WTC11 (cell line): ENCODE measurements at regions of chr1 and their contacts with region 1.

Region 1: DNA sequence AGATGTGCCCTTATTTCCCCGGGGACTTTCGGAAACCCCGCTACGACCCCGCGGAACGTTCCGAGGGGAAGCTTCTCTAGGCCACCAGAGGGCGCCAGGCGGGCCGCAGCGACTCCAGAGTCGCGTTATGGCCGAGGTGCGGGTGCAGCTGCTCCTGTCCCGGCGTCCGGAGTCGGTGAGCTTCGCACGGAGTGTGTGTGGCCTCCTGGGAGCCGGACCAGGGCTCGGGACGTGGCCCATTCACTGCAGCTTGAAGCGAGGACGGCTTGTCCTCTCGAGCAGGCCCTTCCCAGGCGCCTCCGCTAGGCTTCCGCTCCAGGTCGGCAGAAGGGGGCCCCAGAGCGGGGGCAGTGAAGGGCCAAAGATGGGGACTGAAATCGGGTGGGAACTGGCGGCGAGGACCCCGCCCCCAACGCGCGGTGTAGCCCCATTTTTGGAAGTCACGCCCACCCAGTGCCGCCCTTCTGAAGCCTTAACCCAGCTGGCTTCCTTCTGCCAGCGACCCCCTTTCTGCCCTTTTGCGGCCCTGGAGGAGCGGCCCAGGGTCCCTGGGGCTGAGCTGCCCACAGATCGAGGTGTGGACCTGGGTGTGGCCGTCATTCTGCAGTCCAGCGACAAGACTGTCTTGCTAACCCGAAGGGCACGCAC is at the start of gene NUDT17:
- DNase-seq: peak; percentile 88
- ATAC-seq: peak; percentile 78
- H3K4me3 Mint-ChIP-seq: no peak within 1 kb of the TSS
- H3K27ac Mint-ChIP-seq: no peak within 1 kb of the TSS
- H3K4me1 Mint-ChIP-seq: peaks cover 3% of the 10 kb centered on the region; the same call in 1 of the 2 replicates
- H3K27me3 Mint-ChIP-seq: no peaks in the 10 kb centered on the region
- CTCF ChIP-seq: peak; percentile 82
- total RNA-seq, gene NUDT17: 2.7 to 3.5 TPM (median 3.3 TPM) in 3 replicates

Region 2: DNA sequence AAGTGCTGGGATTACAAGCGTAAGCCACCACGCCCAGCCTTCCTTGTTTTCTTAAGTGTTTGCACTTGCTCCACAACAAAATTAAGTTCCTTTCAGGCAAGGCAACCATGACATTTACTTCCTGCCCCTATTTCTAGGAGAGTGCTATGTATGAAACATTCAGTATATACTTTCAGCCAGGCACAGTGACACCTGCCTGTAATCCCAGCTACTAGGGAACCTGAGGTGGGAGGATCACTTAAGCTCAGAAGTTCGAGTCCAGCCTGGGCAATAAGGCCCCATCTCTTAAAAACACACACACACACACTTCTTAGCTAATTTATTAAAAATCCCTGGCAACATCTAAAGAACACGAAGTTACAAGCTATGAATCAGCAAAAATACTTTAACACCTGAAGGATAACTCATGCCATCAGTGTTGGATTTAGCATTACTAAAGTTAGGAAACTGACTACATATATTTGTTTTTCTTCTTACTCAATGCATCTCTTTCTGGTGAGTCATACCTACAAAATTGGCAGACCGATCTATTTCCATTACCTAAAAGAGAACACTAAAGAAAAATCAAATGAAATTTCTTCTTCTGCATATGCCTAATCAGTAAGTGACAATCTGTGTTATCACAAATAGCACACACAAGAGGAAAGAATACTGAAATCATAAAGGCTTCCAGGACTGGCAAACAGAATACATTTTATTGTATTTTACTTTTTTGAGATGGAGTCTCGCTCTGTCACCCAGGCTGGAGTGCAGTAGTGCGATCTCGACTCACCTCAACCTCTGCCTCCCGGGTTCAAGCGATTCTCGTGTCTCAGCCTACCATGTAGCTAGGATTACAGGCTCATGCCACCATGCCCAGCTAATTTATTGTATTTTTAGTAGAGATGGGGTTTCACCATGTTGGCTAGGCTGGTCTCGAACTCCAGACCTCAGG is 63.2 kb before region 1 on chr1:
- CTCF ChIA-PET with region 1: no interaction called
- POLR2A ChIA-PET with region 1: no interaction called
- DNase-seq: no peak
- ATAC-seq: no peak
- H3K4me3 Mint-ChIP-seq: no peak overlapping the region
- H3K27ac Mint-ChIP-seq: 0 out of 2 replicates have a peak overlapping the region, but pooled peaks have one; percentile 44
- H3K4me1 Mint-ChIP-seq: peaks cover 6% of the 10 kb centered on the region; the same call in 1 of the 2 replicates
- H3K27me3 Mint-ChIP-seq: no peaks in the 10 kb centered on the region
- CTCF ChIP-seq: no peak

Region 3: DNA sequence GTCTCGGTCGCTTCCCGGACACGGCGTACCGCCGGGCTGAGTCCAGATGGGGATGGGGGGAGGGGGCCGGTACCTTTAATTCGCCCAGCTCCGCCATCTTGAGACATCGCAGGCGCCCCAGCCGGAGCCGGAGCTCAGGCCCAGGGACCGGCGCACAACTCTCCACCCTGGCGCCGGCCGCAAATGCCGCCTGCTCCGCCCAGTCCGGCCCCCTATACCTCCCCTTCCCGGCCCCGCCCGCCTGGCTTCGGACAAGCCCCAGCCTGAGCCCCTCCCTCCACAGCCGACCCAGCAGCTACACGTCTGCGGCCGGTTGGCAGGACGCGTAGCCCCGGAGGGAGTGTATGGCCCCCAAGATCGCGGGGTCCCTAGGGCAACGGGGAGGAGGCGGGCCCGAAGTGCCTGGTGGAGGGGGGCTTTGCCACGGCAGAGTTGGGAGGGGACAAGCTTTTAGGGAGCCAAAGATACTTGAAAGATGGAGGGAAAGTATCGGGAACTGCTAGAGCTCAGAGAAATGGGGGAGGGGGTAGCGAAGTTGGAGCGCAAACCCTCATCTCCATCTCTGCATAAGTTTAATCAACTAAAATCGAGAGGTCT is 13.4 kb after region 1 on chr1 and contains the start of gene PIAS3:
- CTCF ChIA-PET with region 1: interaction called, 254 read pairs
- POLR2A ChIA-PET with region 1: interaction called, 48 read pairs
- DNase-seq: peak; percentile 98
- ATAC-seq: peak; percentile 82
- H3K4me3 Mint-ChIP-seq: peak within 1 kb of the TSS; percentile 98
- H3K27ac Mint-ChIP-seq: peak within 1 kb of the TSS; percentile 92
- H3K4me1 Mint-ChIP-seq: peaks cover 17% of the 10 kb centered on the region
- H3K27me3 Mint-ChIP-seq: no peaks in the 10 kb centered on the region
- CTCF ChIP-seq: no peak
- total RNA-seq, gene PIAS3: 44.9 to 52.4 TPM (median 49.6 TPM) in 3 replicates

Region 4: GRCh38 chr1:145885738-145886287 is 40.2 kb after region 1 on chr1 and contains the start of gene ANKRD35:
- CTCF ChIA-PET with region 1: interaction called, 39 read pairs
- POLR2A ChIA-PET with region 1: no interaction called
- DNase-seq: peak; percentile 93
- ATAC-seq: peak; percentile 97
- H3K4me3 Mint-ChIP-seq: peak within 1 kb of the TSS; percentile 79
- H3K27ac Mint-ChIP-seq: no peak within 1 kb of the TSS
- H3K4me1 Mint-ChIP-seq: peaks cover 15% of the 10 kb centered on the region
- H3K27me3 Mint-ChIP-seq: peaks cover 35% of the 10 kb centered on the region
- CTCF ChIP-seq: no peak
- total RNA-seq, gene ANKRD35: 2.7 to 3.2 TPM (median 2.9 TPM) in 3 replicates

Region 5: GRCh38 chr1:145906954-145907753 is 61.5 kb after region 1 on chr1:
- CTCF ChIA-PET with region 1: interaction called, 36 read pairs
- POLR2A ChIA-PET with region 1: no interaction called
- DNase-seq: no peak
- ATAC-seq: peak; percentile 25; the same call in 1 of the 2 replicates
- H3K4me3 Mint-ChIP-seq: no peak overlapping the region
- H3K27ac Mint-ChIP-seq: no peak overlapping the region
- H3K4me1 Mint-ChIP-seq: peaks cover 14% of the 10 kb centered on the region
- H3K27me3 Mint-ChIP-seq: peaks cover 3% of the 10 kb centered on the region
- CTCF ChIP-seq: no peak

Region 6: DNA sequence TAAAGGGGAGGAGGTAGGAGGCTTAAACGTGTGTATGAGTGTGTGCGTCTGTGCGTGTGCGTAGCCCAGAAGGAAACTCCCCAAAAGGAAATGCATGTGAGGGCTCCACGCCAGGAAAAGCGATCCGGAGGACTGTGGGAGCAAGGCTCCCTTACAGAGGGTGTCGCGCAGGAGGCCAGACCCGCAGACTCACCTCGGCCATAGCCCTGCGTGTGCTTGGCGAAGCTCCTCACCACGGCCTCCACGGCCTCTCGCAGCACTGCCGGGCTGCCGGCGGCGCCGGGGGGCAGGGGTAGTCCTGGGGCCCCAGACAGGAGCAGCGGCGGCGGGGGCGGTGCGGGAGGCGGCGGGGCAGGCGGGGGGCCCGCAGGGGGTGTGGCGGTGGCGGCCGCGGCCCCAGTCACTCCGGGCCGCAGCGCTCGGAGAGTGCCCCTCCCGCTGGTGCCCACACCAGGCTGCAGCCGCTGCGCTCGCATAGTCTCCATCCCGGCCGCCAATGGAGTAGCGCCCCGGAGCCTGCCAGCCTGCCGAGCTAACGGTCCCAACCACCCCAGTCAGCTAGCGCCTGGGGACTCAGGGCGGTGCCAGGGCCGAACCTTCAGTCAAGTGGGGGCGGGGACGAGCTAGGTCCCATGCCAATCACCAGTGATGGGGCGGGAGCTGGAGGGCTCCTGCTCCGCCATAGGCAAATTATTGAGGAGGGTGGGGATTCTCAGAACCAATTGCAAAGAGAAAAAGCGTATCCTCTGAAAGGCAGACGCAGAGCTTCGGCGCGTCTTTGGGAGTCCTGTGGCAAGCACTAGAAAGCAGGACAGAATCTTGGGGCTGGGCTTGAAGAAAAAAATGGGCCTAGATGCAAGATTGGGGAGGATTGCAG is 112.0 kb after region 1 on chr1 and contains the start of gene LIX1L:
- CTCF ChIA-PET with region 1: interaction called, 13 read pairs
- POLR2A ChIA-PET with region 1: no interaction called
- DNase-seq: peak; percentile 96
- ATAC-seq: peak; percentile 86
- H3K4me3 Mint-ChIP-seq: peak within 1 kb of the TSS; percentile 70
- H3K27ac Mint-ChIP-seq: peak within 1 kb of the TSS; percentile 14; the same call in 1 of the 2 replicates
- H3K4me1 Mint-ChIP-seq: peaks cover 31% of the 10 kb centered on the region
- H3K27me3 Mint-ChIP-seq: peaks cover 92% of the 10 kb centered on the region
- CTCF ChIP-seq: no peak
- total RNA-seq, gene LIX1L: 3.0 to 3.8 TPM (median 3.8 TPM) in 3 replicates

Region 7: GRCh38 chr1:146007506-146008133 is 162.0 kb after region 1 on chr1:
- CTCF ChIA-PET with region 1: interaction called, 29 read pairs
- POLR2A ChIA-PET with region 1: no interaction called
- DNase-seq: no peak
- ATAC-seq: no peak
- H3K4me3 Mint-ChIP-seq: no peak overlapping the region
- H3K27ac Mint-ChIP-seq: no peak overlapping the region
- H3K4me1 Mint-ChIP-seq: no peaks in the 10 kb centered on the region
- H3K27me3 Mint-ChIP-seq: no peaks in the 10 kb centered on the region
- CTCF ChIP-seq: no peak; the same call in 1 of the 2 replicates